ENCODE measurements at regions of chr6 and their contacts with region 1.

Region 1: GRCh38 chr6:2611090-2611489 is 139.6 kb downstream of the MYLK4 start:
- DNase-seq: peak; percentile 17
- H3K4me3 ChIP-seq: no peak overlapping the region
- H3K27ac ChIP-seq: no peak overlapping the region
- H3K4me1 ChIP-seq: no peaks in the 10 kb centered on the region
- H3K27me3 ChIP-seq: no peaks in the 10 kb centered on the region
- CTCF ChIP-seq: peak in 1 of 2 donors; percentile 13

Region 2: GRCh38 chr6:2542858-2543218 is 68.3 kb before region 1 on chr6:
- CTCF ChIA-PET with region 1: no interaction called
- dilution Hi-C with region 1: loop called (anchors 5 kb)
- in situ Hi-C with region 1: no loop called
- intact Hi-C with region 1: no loop called
- DNase-seq: peak; percentile 94
- H3K4me3 ChIP-seq: no peak overlapping the region
- H3K27ac ChIP-seq: no peak overlapping the region
- H3K4me1 ChIP-seq: peaks cover 17% of the 10 kb centered on the region
- H3K27me3 ChIP-seq: no peaks in the 10 kb centered on the region
- CTCF ChIP-seq: no peak

Measured in mammary epithelial cell (primary cell).